H1 (cell line): ENCODE measurements at regions of chr21 and their contacts with region 1.

Region 1: GRCh38 chr21:45880097-45881068 is 101.2 kb upstream of the COL6A1 start:
- DNase-seq: peak; percentile 44 to 88
- H3K4me3 ChIP-seq: no peak overlapping the region
- H3K27ac ChIP-seq: no peak overlapping the region
- H3K4me1 ChIP-seq: no peaks in the 10 kb centered on the region; a peak in 2 of 7 replicates
- H3K27me3 ChIP-seq: no peaks in the 10 kb centered on the region
- CTCF ChIP-seq: peak; percentile 68 to 94 (median 84)
- EP300 ChIP-seq: no peak
- POLR2A ChIP-seq: no peak
- RAD21 ChIP-seq: peak; percentile 52 to 71

Region 2: DNA sequence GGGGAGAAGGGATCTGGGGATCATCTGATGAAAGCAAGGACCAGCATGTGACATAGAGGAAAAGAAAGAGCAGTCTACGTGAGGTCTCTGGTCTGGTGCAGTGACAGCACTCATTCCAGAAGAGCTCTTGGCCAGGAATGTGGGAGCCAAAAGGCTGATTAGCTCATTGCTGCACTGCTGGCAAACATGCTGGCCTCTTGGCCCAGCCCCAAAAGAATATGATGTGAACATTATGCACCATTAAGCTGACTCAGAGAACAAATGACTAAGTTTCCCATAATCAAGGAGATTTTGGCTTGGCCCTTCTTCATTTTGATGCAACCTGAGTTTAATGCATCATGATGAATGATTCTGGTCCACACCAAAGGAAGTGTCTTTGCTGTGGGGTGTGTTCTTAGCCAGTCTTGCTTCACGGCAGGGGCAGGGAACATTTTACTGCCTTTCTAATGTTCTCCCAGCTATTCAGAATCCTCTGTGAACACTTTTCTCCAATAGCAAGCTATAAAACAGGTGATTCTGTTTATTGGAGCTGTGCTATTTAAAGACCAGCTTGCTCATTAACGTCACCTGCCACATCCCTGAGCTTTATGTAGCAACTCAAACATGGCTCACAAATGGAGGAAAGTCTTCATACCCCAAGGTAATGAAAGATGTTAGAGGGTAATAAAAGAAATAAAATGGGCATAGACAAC is 181.7 kb before region 1 on chr21:
- CTCF ChIA-PET with region 1: interaction called, 11 read pairs
- POLR2A ChIA-PET with region 1: no interaction called
- DNase-seq: no peak
- H3K4me3 ChIP-seq: no peak overlapping the region
- H3K27ac ChIP-seq: no peak overlapping the region
- H3K4me1 ChIP-seq: no peaks in the 10 kb centered on the region
- H3K27me3 ChIP-seq: no peaks in the 10 kb centered on the region
- CTCF ChIP-seq: no peak
- EP300 ChIP-seq: no peak
- POLR2A ChIP-seq: no peak
- RAD21 ChIP-seq: no peak

Region 3: DNA sequence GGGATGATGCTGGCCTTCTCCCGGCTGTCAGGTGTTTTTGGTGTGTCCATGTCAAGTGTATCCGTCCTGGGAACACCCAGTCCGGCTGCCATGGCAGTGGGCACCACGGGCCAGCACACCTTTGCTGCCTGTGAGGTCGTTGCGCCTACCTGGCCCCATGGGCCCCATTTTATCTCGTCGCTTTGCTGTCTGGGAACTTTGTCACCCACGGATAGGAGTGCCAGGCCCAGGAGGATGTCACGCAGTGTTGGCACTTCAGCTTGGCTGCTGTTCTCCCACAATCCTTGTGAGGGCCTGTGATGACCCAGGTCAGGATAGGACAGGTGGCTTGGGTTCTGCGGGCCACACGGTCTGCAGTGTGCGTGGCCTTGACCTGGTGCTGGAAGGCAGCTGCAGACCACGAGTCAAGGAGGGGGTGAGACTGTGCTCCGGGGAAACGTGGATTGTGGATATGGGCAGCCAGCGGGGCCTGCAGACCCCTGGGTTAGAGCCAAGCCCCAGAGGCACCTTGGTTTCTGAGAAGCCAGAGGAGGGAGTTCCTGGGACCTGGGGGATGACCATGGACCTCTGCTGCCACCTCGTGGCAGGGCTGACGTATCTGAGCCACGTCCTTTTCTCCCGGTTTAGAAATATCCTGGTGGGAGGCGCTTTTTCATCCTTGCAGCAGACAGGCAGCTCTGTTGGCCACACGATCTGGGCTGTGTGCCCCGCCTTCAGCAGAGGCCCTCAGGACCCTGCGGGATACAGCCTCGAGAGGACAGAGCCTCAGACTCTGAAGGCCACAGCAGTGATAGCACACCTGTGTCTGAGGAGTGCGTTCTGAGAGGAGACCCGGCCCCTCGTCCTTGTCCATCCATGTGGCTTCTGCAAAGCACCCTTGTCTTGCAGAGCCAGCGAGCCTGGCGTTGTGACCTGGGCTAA is 60.0 kb before region 1 on chr21:
- CTCF ChIA-PET with region 1: interaction called, 14 read pairs
- POLR2A ChIA-PET with region 1: no interaction called
- DNase-seq: peak; percentile 85 to 89
- H3K4me3 ChIP-seq: no peak overlapping the region
- H3K27ac ChIP-seq: no peak overlapping the region
- H3K4me1 ChIP-seq: peaks cover 0 to 8% (median 1%) of the 10 kb centered on the region in 4 experiments; a peak in 2 of 7 replicates
- H3K27me3 ChIP-seq: no peaks in the 10 kb centered on the region
- CTCF ChIP-seq: peak; percentile 84 to 97 (median 90)
- EP300 ChIP-seq: no peak; a peak in 1 of 3 replicates
- POLR2A ChIP-seq: no peak
- RAD21 ChIP-seq: peak; percentile 96 to 97

Region 4: DNA sequence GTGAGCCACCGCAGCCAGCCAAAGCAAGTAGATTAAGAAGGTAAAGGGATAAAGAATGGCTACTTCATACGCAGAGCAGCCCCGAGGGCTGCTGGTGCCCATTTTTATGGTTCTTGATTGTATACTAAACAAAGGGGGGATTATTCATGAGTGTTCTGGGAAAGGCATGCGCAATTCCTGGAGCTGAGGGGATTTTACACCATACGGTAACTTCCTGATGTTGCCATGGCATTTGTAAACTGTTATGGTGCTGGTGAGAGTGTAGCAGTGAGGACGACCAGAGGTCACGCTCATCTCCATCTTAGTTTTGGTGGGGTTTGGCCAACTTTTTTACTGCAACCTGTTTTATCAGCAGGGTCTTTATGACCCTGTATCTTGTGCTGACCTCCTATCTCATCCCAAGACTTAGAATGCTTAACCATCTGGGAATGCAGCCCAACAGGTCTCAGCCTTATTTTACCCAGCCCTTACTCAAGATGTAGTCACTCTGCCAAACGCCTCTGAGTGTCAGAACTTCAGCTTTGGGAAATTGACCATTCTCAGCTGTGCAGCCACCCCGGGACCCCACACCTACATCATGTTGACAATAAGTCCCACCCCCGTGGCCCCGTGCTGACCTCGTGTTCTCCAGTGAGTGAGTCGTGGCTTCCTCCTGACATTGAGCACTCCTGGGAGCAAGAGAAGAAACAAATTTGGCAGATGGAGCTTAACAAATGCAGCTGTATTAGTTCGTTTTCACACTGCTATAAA is 48.2 kb before region 1 on chr21:
- CTCF ChIA-PET with region 1: interaction called, 14 read pairs
- POLR2A ChIA-PET with region 1: no interaction called
- DNase-seq: peak in 1 of 2 experiments; percentile 29
- H3K4me3 ChIP-seq: no peak overlapping the region
- H3K27ac ChIP-seq: no peak overlapping the region
- H3K4me1 ChIP-seq: peaks cover 0 to 2% (median 0%) of the 10 kb centered on the region in 4 experiments; a peak in 1 of 7 replicates
- H3K27me3 ChIP-seq: no peaks in the 10 kb centered on the region
- CTCF ChIP-seq: no peak
- EP300 ChIP-seq: no peak
- POLR2A ChIP-seq: no peak
- RAD21 ChIP-seq: no peak

Region 5: DNA sequence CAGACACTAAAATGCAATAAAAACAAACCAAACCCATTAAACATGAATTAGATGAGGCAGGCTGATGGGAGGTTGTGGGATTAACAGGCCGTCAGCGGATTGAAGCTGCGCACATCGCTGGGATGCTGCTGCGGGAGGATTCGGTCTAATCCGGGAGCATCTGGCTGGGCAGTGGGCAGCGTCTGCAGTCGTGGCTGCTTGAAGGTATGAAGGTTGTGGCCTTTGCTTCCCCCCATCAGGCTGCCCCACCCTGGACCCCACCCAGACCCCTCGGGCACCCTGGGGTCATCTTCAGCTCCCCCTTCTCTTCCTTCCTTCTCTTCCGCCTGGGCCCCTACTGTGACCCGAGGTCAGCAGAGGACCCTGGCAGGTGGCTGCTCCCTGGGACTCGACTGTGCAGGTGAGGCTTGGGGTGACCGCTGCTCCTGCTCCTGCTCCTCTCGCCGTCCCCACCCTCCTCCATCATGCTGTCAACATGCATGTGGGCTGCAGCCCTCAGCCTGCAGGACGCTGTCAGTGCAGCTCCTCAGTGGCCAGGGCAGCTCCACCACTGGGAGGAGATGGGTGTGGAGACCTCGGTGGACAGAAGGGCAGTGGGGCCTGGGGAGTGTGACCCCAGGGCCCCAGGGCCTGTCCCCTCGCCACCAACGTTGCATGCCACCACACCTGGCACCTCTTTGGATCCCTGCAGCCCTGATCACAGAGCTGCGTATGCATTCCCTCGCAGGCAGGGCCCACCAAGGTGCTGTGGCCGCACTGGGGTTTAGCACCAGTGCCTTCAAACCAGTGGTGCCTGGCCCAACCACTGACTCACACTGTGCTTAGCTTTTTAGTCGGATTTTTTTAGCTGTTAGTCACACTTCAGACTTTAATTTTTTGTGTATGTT is 11.0 kb before region 1 on chr21:
- CTCF ChIA-PET with region 1: interaction called, 29 read pairs
- POLR2A ChIA-PET with region 1: no interaction called
- DNase-seq: no peak
- H3K4me3 ChIP-seq: no peak overlapping the region
- H3K27ac ChIP-seq: no peak overlapping the region
- H3K4me1 ChIP-seq: no peaks in the 10 kb centered on the region; a peak in 1 of 7 replicates
- H3K27me3 ChIP-seq: no peaks in the 10 kb centered on the region
- CTCF ChIP-seq: no peak
- EP300 ChIP-seq: no peak
- POLR2A ChIP-seq: no peak
- RAD21 ChIP-seq: no peak

Region 6: GRCh38 chr21:45923146-45923545 is 42.8 kb after region 1 on chr21:
- CTCF ChIA-PET with region 1: interaction called, 30 read pairs
- POLR2A ChIA-PET with region 1: no interaction called
- DNase-seq: peak; percentile 56 to 84
- H3K4me3 ChIP-seq: no peak overlapping the region
- H3K27ac ChIP-seq: no peak overlapping the region
- H3K4me1 ChIP-seq: no peaks in the 10 kb centered on the region
- H3K27me3 ChIP-seq: peaks cover 0 to 4% (median 0%) of the 10 kb centered on the region in 4 experiments; a peak in 2 of 7 replicates
- CTCF ChIP-seq: peak; percentile 80 to 94 (median 93)
- EP300 ChIP-seq: no peak
- POLR2A ChIP-seq: no peak
- RAD21 ChIP-seq: peak; percentile 86 to 87